Psoas muscle (tissue), 8 donors: ENCODE measurements at regions of chr1 and their contacts with region 1.

Region 1: GRCh38 chr1:150532868-150533302 is 16.3 kb upstream of the ADAMTSL4 start:
- DNase-seq: no peak
- ATAC-seq: no peak
- H3K4me3 ChIP-seq: no peak overlapping the region
- H3K27ac ChIP-seq: peak overlapping the region; percentile 73
- H3K4me1 ChIP-seq: peaks cover 24% of the 10 kb centered on the region
- H3K27me3 ChIP-seq: no peaks in the 10 kb centered on the region
- CTCF ChIP-seq: no peak

Region 2: GRCh38 chr1:150464422-150464826 is 68.5 kb before region 1 on chr1:
- intact Hi-C with region 1: loop called (anchors 1 to 5 kb)
- DNase-seq: peak; percentile 40 to 70
- ATAC-seq: peak; percentile 78 to 82 (median 81)
- H3K4me3 ChIP-seq: no peak overlapping the region
- H3K27ac ChIP-seq: no peak overlapping the region
- H3K4me1 ChIP-seq: no peaks in the 10 kb centered on the region
- H3K27me3 ChIP-seq: no peaks in the 10 kb centered on the region
- CTCF ChIP-seq: peak; percentile 77